SK-N-SH (cell line): ENCODE measurements at regions of chr13 and their contacts with region 1.

Region 1: DNA sequence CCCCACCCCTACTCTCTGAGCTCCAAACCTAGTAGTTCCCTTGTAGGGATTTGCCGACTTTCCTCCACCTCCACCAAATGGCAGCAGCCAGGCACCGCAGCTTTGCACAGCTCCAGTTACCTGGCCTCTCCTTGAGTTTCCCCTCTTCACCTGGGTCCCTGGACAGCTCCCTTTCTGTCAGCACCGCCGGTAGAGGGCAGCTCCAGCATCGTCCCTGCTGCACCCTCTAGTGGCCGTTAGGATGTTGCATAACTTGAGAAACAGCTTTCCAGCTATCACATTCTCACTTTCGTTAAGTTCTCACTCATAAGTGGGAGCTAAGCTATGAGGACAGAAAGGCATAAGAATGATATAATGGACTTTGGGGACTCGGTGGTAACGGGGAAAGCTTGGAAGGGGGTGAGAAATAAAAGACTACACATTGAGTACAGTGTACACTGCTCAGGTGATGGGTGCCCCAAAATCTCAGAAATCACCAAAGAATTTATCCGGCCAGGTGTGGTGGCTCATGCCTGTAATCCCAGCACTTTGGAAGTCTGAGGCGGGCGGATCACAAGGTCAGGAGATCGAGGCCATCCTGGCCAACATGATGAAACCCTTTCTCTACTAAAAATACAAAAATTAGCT is 60.4 kb upstream of the OLFM4 start:
- DNase-seq: peak; percentile 71
- H3K4me3 ChIP-seq: no peak overlapping the region; a peak in 1 of 4 replicates
- H3K27ac ChIP-seq: no peak overlapping the region
- H3K4me1 ChIP-seq: no peaks in the 10 kb centered on the region
- H3K27me3 ChIP-seq: no peaks in the 10 kb centered on the region
- CTCF ChIP-seq: peak; percentile 96
- EP300 ChIP-seq: no peak
- RAD21 ChIP-seq: peak; percentile 83

Region 2: GRCh38 chr13:52809310-52809769 is 158.8 kb before region 1 on chr13:
- CTCF ChIA-PET with region 1: interaction called, 11 read pairs
- POLR2A ChIA-PET with region 1: no interaction called
- DNase-seq: peak; percentile 93
- H3K4me3 ChIP-seq: no peak overlapping the region; a peak in 1 of 4 replicates
- H3K27ac ChIP-seq: peak overlapping the region in 1 of 2 experiments; percentile 21; a peak in 1 of 4 replicates
- H3K4me1 ChIP-seq: peaks cover 6 to 7% of the 10 kb centered on the region in 2 experiments
- H3K27me3 ChIP-seq: no peaks in the 10 kb centered on the region; the same call in 1 of the 2 replicates
- CTCF ChIP-seq: peak; percentile 78
- EP300 ChIP-seq: peak in 1 of 2 experiments; percentile 59; a peak in 1 of 4 replicates
- RAD21 ChIP-seq: peak; percentile 93

Region 3: DNA sequence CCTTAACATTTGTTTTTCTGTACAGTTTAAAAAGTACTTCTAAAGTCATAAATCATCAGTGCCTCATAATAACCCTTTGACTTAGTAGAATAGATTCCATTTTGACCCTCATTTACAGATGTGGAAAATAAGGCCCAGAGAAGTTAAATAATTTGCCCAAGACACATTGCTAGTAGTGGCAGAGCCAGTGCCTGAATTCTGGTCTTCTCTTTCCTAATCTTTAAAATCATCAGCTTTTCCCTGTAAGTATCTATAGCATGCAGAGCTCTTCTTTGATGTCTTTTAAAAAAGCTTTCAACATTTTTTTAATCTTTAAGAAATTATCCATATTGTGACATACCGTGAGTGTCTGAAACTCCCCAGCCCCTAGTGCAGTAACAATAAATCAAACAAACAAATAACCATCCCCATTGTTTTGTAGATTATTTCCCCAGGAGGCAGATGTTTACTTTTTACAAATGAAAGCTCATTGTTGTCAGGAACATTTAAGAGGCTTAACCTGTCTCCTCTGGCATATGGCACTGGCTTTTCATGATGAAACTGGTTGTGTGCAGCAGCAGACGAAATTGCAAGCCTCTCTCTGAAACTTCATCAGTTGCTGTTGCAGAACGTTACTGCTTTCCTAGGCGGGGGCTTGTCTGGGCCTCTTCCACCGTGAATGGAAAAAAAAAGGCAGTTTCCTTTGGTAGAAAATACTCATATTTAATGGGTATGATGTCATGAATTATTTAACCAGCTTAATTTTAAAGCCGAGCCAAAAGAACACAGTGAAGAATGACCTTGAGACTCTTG is 88.0 kb before region 1 on chr13:
- CTCF ChIA-PET with region 1: interaction called, 11 read pairs
- POLR2A ChIA-PET with region 1: no interaction called
- DNase-seq: no peak
- H3K4me3 ChIP-seq: no peak overlapping the region
- H3K27ac ChIP-seq: no peak overlapping the region
- H3K4me1 ChIP-seq: no peaks in the 10 kb centered on the region
- H3K27me3 ChIP-seq: no peaks in the 10 kb centered on the region
- CTCF ChIP-seq: no peak
- EP300 ChIP-seq: no peak
- RAD21 ChIP-seq: no peak

Region 4: DNA sequence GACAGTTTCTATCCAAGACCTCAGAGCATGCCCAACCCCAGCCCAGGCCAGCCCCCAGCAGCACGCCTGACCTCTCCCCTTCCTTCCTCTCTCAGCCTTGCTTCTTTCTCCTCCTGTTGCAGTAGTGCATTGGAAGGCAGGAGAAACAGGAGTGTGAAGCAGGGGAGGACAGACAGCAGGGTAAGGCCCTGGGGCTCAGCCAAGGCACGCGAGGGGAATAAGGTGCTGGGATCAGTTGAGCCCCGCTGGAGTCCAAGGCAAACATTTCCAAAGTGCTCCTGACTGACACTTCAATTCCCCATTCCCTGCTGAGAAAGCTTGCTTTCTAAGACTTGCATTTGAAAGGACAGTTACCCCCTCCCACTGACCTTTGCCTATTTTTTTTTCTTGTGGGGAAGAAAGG is 12.7 kb before region 1 on chr13:
- CTCF ChIA-PET with region 1: interaction called, 76 read pairs
- POLR2A ChIA-PET with region 1: no interaction called
- DNase-seq: no peak
- H3K4me3 ChIP-seq: no peak overlapping the region
- H3K27ac ChIP-seq: no peak overlapping the region
- H3K4me1 ChIP-seq: no peaks in the 10 kb centered on the region
- H3K27me3 ChIP-seq: no peaks in the 10 kb centered on the region
- CTCF ChIP-seq: no peak
- EP300 ChIP-seq: no peak
- RAD21 ChIP-seq: no peak

Region 5: GRCh38 chr13:53052675-53053074 is 84.5 kb after region 1 on chr13:
- CTCF ChIA-PET with region 1: interaction called, 20 read pairs
- POLR2A ChIA-PET with region 1: interaction called, 3 read pairs
- DNase-seq: no peak
- H3K4me3 ChIP-seq: no peak overlapping the region
- H3K27ac ChIP-seq: no peak overlapping the region
- H3K4me1 ChIP-seq: no peaks in the 10 kb centered on the region; a peak in 1 of 4 replicates
- H3K27me3 ChIP-seq: no peaks in the 10 kb centered on the region
- CTCF ChIP-seq: no peak
- EP300 ChIP-seq: no peak
- RAD21 ChIP-seq: no peak

Region 6: DNA sequence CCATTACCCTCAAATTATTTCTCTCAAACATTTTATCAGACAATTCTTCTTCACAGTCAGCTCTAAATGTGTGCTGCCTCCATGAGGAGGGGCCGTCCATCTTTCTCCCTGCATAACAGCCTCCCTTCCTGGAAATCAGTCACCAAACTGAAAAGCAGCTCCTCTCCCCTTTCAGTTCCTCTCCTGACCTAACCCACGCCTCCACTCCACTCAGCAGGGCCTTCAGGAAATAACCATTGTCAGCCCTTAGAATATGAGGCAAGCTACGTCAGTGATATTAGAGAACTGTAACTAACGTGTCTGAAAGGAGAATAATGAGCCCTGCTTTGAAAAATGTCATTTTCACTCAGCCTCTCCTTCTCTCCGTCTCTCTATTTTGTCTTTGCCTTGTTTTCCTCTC is 176.6 kb after region 1 on chr13:
- CTCF ChIA-PET with region 1: interaction called, 128 read pairs
- POLR2A ChIA-PET with region 1: no interaction called
- DNase-seq: no peak
- H3K4me3 ChIP-seq: no peak overlapping the region
- H3K27ac ChIP-seq: no peak overlapping the region; a peak in 1 of 4 replicates
- H3K4me1 ChIP-seq: no peaks in the 10 kb centered on the region; a peak in 2 of 4 replicates
- H3K27me3 ChIP-seq: no peaks in the 10 kb centered on the region
- CTCF ChIP-seq: no peak
- EP300 ChIP-seq: no peak
- RAD21 ChIP-seq: no peak

Region 7: GRCh38 chr13:53622456-53622855 is 654.3 kb after region 1 on chr13:
- CTCF ChIA-PET with region 1: no interaction called
- POLR2A ChIA-PET with region 1: no interaction called
- DNase-seq: no peak
- H3K4me3 ChIP-seq: no peak overlapping the region
- H3K27ac ChIP-seq: no peak overlapping the region
- H3K4me1 ChIP-seq: no peaks in the 10 kb centered on the region
- H3K27me3 ChIP-seq: no peaks in the 10 kb centered on the region
- CTCF ChIP-seq: no peak
- EP300 ChIP-seq: no peak
- RAD21 ChIP-seq: no peak